Posterior cingulate gyrus (tissue), 11 donors: ENCODE measurements at regions of chr4 and their contacts with region 1.

Region 1: GRCh38 chr4:37826295-37827029 is at the start of gene PGM2:
- DNase-seq: peak; percentile 71 to 98 (median 84)

Region 2: DNA sequence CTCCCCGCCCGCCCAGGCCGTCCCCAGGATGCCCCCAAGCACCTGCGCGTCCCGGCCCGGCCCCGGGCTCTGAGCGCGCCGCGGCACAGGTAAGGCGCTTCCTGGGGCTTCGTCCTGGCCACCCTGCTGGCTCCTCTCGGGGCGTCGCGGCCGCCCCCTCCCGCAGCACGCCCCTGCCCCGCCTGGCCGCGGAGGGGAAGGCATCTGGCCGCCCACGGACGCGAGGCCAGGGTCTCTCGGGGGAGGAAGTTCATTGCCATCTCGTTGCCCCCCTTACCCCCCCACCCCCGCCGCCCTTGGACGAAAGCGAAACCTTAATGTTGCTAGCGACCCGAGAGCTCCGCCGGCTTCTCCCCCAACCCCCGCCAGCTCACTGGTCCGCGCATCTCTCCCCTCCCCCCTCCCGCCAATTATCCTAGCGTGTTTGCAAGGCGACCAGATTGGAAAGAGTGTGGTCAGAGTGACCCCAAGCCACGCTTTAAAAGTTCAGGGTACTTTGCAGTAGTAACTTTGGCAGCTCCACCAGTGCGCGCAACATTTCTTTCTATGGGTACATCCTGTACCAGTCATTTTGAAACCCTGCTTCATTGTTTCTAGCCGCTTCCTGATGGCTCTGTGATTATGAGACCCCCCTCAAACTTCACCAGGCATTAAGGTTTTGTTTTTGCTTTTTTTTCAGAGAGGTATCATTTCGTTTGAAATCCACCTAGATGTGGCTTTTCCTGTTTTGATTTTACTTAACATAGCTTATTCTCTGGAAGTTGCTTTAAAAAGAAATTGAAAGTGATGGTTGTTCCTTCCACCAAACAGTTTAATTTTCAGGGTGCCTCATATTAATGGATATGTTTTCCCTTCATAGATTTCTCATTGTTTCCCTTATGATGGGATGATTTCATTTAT is 65.0 kb after region 1 on chr4:
- intact Hi-C with region 1: loop called (anchors 5 kb)
- DNase-seq: peak in 2 of 10 donors; percentile 12 to 49